Activated T-helper 2 cell treated with anti-CD3 and anti-CD28 coated beads, Interferon-gamma antibody, Interleukin-2, Interleukin-4, amounts not matched to agents 10 μg/mL and 5 μg/mL and 100 μg/mL, durations not matched to agents 14 hours and 24 hours and 36 hours (primary cell): ENCODE measurements at regions of chr4 and their contacts with region 1.

Region 1: DNA sequence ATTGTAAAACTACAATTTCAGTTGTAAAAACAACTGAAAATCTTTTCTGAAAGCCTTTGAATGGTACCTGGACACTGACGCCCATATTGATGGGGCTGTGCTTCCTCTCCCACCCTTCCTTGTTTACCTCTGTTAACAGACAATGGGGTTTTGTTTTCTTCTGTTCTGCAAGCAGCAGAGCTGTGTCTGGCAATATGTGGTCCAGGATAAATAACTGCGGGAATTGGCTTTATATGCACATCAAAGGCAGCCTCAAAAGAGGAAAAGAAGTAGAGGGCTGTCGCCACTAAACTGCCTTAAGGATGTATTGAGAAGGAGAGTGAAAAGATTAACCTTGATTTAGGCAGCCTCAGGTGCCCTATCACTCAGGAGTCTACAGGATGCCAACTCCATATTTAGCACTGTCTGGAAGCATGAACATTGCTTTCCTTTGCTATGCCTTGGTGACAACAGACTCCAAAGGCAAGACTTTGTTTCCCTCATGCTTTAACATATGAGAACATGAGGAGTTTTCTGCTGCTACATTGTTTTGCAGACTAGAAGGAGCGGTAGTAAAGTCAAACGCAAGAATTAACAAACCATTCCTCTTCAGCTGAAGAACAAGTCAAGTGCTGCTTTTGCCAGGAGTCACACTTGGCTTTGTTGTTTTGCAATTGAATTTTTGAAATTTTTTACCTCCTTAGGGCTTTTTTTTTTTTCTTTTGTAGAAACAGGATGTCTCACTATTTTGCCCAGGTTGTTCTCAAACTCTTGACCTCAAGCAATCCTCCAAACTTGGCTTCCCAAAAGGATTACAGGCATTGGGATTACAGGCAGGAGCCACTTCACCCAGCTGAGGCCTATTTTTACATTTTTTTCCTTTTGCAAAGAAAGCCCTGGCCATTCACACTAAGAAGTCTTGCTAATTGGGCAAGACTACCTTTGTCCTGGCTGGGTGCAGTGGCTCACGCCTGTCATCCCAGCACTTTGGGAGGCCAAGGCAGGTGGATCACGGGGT is 3.0 kb downstream of the IL21 start:
- DNase-seq: no peak
- H3K4me3 Mint-ChIP-seq: peak overlapping the region; percentile 35
- H3K27ac Mint-ChIP-seq: peak overlapping the region; percentile 52
- H3K4me1 Mint-ChIP-seq: peaks cover 44% of the 10 kb centered on the region
- H3K27me3 Mint-ChIP-seq: no peaks in the 10 kb centered on the region

Region 2: GRCh38 chr4:122542411-122543236 is 75.3 kb before region 1 on chr4:
- intact Hi-C with region 1: loop called (anchors 2 kb)
- DNase-seq: no peak
- H3K4me3 Mint-ChIP-seq: peak overlapping the region; percentile 53
- H3K27ac Mint-ChIP-seq: peak overlapping the region; percentile 87
- H3K4me1 Mint-ChIP-seq: peaks cover 74% of the 10 kb centered on the region
- H3K27me3 Mint-ChIP-seq: peaks cover 1% of the 10 kb centered on the region

Region 3: GRCh38 chr4:122602277-122603142 is 15.4 kb before region 1 on chr4:
- intact Hi-C with region 1: loop called (anchors 1 kb)
- DNase-seq: no peak
- H3K4me3 Mint-ChIP-seq: peak overlapping the region; percentile 35
- H3K27ac Mint-ChIP-seq: peak overlapping the region; percentile 31
- H3K4me1 Mint-ChIP-seq: peaks cover 18% of the 10 kb centered on the region
- H3K27me3 Mint-ChIP-seq: peaks cover 16% of the 10 kb centered on the region

Region 4: DNA sequence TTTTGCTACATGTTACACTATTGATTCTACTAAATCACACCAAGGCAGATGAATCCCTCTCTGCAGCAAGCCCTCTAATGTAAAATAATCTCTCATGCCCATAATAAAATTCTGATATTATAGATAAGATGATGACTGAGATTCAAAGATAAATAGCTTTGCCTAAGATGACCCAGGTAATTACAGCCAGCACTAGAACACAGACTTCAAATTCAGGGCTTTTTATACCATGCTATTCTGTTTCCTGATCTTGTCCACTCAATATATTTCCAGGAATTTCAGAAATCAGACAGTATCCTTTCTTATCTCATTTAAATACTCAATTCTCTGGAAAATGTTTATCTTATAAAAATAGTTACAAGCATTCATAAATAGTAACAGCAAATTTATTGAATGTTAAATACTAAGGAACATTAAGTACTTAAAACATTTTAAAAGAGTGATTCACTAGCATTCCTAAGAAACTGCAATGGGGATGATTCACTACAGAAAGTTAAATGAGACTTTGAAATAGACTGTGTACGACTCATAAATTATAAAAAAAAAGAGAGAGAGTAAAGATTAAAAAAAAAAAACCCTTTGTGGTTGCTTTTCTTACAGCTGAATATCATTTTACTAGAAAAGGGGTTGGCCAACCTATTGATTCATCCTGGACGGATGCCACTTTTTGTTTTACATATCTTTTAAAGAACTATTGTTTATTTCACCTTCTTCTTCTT is 48.8 kb after region 1 on chr4:
- intact Hi-C with region 1: loop called (anchors 2 kb)
- DNase-seq: no peak
- H3K4me3 Mint-ChIP-seq: peak overlapping the region; percentile 60
- H3K27ac Mint-ChIP-seq: peak overlapping the region; percentile 78
- H3K4me1 Mint-ChIP-seq: peaks cover 70% of the 10 kb centered on the region
- H3K27me3 Mint-ChIP-seq: no peaks in the 10 kb centered on the region

Region 5: GRCh38 chr4:122689972-122690371 is 72.1 kb after region 1 on chr4:
- intact Hi-C with region 1: loop called (anchors 1 kb)
- DNase-seq: peak; percentile 34
- H3K4me3 Mint-ChIP-seq: no peak overlapping the region
- H3K27ac Mint-ChIP-seq: peak overlapping the region; percentile 70
- H3K4me1 Mint-ChIP-seq: peaks cover 72% of the 10 kb centered on the region
- H3K27me3 Mint-ChIP-seq: peaks cover 8% of the 10 kb centered on the region